ENCODE measurements at regions of chr1 and their contacts with region 1.

Region 1: GRCh38 chr1:89483010-89483756 is 41.4 kb upstream of the LRRC8B start:
- DNase-seq: peak; percentile 81
- ATAC-seq: peak; percentile 89
- H3K4me3 ChIP-seq: no peak overlapping the region
- H3K27ac ChIP-seq: no peak overlapping the region
- H3K4me1 ChIP-seq: no peaks in the 10 kb centered on the region
- H3K27me3 ChIP-seq: peaks cover 6% of the 10 kb centered on the region
- CTCF ChIP-seq: peak; percentile 71
- POLR2A ChIP-seq: no peak
- RAD21 ChIP-seq: peak; percentile 78

Region 2: GRCh38 chr1:89598450-89599331 is 115.5 kb after region 1 on chr1:
- CTCF ChIA-PET with region 1: no interaction called
- POLR2A ChIA-PET with region 1: no interaction called
- dilution Hi-C with region 1: loop called (anchors 25 kb)
- in situ Hi-C with region 1: loop called (anchors 10 kb)
- intact Hi-C with region 1: loop called (anchors 1 kb)
- DNase-seq: peak; percentile 39
- ATAC-seq: peak; percentile 88
- H3K4me3 ChIP-seq: no peak overlapping the region
- H3K27ac ChIP-seq: no peak overlapping the region
- H3K4me1 ChIP-seq: 0 out of 2 replicates have a peak, but pooled peaks cover 2% of the 10 kb centered on the region
- H3K27me3 ChIP-seq: no peaks in the 10 kb centered on the region
- CTCF ChIP-seq: peak; percentile 69
- POLR2A ChIP-seq: no peak
- RAD21 ChIP-seq: peak; percentile 60

Region 3: DNA sequence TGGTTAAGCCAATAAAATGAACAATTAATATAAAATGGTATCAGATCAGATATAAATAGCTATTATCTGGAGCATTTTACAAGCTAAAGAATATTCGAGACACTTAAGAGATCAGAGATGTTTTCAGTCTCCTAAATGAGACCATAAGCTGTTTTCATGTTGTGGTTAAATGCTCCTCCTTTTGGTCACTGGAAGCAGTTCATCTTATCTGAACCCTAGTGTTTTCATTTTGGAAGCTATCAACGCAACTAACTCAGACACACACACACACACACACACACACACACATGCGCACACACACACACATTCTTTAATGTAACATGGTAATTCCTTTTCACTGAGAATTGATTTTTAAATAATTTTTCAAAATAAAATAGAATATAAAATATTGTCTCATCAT is 139.7 kb after region 1 on chr1:
- CTCF ChIA-PET with region 1: interaction called, 4 read pairs
- POLR2A ChIA-PET with region 1: no interaction called
- dilution Hi-C with region 1: no loop called
- in situ Hi-C with region 1: no loop called
- intact Hi-C with region 1: loop called (anchors 2 kb)
- DNase-seq: peak; percentile 38
- ATAC-seq: no peak
- H3K4me3 ChIP-seq: no peak overlapping the region
- H3K27ac ChIP-seq: no peak overlapping the region
- H3K4me1 ChIP-seq: no peaks in the 10 kb centered on the region
- H3K27me3 ChIP-seq: no peaks in the 10 kb centered on the region
- CTCF ChIP-seq: peak; percentile 31; the same call in 1 of the 2 replicates
- POLR2A ChIP-seq: no peak
- RAD21 ChIP-seq: 0 out of 2 replicates have a peak, but pooled peaks have one; percentile 20

Region 4: DNA sequence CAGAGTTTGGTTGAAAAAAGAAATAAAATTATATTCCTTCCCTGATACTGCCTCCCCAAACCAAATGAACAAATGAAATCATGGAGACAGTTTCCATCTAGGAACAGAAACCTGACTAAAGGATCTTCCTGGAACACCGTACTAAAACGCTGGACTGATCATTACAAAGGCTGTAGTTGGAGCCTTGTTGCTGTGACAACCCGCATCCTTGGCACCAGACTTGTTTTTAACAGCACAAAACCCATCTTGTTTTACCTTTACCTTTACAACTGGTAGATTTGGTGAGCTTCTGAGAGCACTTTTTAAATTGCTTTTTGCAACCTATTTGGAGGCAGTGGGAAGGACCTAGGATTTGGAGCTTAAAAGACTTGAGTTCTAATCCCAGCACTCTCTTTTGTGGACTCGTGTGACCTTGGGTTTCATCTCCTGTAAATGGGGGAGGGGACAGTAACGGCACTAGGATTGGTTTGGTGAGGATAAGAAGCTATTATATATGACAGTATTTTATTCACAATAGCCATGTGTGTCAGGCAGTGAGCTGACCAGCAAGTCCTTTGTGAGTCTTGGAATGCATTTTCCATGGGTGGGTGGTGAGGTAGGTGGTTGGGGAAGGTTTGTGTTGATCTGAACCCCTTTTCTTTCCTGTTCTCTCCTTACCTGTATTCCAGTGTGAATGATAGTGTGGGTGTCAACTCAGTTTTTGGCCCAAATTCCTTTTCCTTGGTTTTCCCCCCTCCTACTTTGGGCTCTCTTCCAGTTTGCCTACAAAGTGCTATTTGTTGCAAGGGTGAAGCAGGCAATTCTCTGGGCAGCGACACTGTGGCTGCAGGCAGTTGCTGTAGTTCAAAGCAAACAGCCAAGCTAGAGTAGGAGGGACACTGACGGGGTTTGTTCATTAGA is 350.2 kb after region 1 on chr1:
- CTCF ChIA-PET with region 1: no interaction called
- POLR2A ChIA-PET with region 1: no interaction called
- dilution Hi-C with region 1: no loop called
- in situ Hi-C with region 1: no loop called
- intact Hi-C with region 1: no loop called
- DNase-seq: no peak
- ATAC-seq: no peak
- H3K4me3 ChIP-seq: no peak overlapping the region
- H3K27ac ChIP-seq: no peak overlapping the region
- H3K4me1 ChIP-seq: peaks cover 4% of the 10 kb centered on the region
- H3K27me3 ChIP-seq: no peaks in the 10 kb centered on the region
- CTCF ChIP-seq: no peak
- POLR2A ChIP-seq: no peak
- RAD21 ChIP-seq: no peak

Region 5: DNA sequence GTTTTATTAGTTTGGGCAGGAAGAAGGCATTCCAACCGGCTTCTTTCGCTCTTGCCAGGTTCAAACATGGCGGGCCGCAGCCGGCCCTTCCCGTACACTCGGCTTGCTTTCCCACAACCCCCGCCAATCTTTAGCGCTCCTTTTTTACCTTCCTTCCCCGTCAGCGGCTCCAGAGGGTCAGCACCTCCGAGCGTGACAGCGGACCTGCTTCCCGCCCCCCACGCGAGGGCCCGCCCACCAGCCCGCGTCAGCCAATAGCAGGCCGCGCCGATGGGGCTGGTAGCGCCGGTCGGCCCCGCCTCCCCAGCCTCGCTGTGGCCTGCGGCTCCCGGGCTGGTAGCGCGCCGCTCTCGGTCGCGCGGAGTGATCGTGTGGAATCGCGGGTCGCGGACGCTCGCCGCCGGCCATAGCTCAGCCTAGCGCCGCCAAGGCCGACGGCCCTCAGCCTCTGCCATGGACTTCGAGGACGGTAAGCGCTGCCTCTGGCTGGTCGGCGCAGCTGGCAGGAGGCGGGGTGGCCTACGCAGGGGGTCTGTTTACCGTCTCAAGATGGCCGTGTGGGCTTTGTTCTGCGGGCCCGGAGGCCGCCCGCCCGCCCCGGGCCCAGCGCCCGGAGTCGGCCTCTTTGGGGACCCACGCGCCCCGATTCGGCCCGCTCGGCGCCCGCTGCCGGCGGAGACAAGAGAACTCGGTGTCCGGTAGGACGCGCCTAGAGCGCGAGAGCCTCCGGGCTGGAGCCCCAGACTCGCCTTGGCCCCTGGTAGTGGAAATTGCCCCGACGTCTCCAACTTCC is 511.8 kb after region 1 on chr1 and contains the start of gene ZNF326:
- CTCF ChIA-PET with region 1: no interaction called
- POLR2A ChIA-PET with region 1: no interaction called
- dilution Hi-C with region 1: no loop called
- in situ Hi-C with region 1: loop called (anchors 25 kb)
- intact Hi-C with region 1: no loop called
- DNase-seq: peak; percentile 97
- ATAC-seq: peak; percentile 96
- H3K4me3 ChIP-seq: peak within 1 kb of the TSS; percentile 89
- H3K27ac ChIP-seq: peak within 1 kb of the TSS; percentile 95
- H3K4me1 ChIP-seq: no peaks in the 10 kb centered on the region; the same call in 1 of the 2 replicates
- H3K27me3 ChIP-seq: no peaks in the 10 kb centered on the region
- CTCF ChIP-seq: no peak
- POLR2A ChIP-seq: peak; percentile 98
- RAD21 ChIP-seq: no peak
- total RNA-seq, gene ZNF326: 4.5 and 10.0 TPM in 2 replicates